ENCODE measurements at regions of chr9 and their contacts with region 1.

Region 1: GRCh38 chr9:132235946-132236661 is 74.2 kb downstream of the NTNG2 start:
- DNase-seq: peak in 1 of 2 donors; percentile 85
- ATAC-seq: no peak

Region 2: GRCh38 chr9:131762356-131762932 is 473.7 kb before region 1 on chr9:
- intact Hi-C with region 1: loop called (anchors 5 to 10 kb)
- DNase-seq: peak; percentile 33 to 75
- ATAC-seq: peak; percentile 97

Region 3: DNA sequence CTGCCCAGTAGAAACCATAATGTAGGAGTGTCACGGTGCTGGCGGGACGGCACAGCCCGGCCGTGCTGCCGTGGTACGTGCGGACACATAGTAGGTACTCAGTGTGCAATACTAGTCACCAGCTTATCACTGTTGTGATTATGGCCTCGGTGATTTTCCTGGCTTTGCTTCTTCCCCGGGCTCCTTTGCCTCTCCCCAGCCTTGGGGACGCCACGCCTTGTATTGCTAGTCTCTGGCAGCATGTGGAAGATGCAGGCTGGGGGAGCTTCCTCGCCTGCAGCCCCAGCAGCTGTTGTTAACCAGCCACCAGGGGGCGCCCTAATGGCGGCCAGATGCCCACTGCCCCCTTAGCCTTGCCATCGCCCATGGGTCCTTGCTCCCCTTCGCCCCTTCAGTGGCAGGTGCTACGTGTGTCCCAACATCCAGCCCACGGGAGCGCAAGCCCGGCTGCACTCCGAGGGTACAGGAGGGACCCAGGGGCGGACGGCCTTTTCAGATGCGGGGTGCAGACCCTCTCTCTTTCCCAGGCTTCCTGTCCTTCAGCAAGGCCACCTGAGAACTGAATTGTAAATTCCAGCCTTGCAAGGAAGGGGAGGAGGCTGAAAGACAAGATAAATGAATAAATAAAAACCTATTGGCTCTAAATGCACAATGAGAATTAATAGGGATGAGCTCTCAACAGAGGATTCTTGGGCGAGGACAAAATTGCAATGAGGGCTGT is 66.3 kb before region 1 on chr9:
- intact Hi-C with region 1: loop called in 1 of 2 experiments (anchors 10 kb)
- DNase-seq: peak; percentile 32 to 51
- ATAC-seq: peak; percentile 68